ENCODE measurements at regions of chr6 and their contacts with region 1.

Region 1: DNA sequence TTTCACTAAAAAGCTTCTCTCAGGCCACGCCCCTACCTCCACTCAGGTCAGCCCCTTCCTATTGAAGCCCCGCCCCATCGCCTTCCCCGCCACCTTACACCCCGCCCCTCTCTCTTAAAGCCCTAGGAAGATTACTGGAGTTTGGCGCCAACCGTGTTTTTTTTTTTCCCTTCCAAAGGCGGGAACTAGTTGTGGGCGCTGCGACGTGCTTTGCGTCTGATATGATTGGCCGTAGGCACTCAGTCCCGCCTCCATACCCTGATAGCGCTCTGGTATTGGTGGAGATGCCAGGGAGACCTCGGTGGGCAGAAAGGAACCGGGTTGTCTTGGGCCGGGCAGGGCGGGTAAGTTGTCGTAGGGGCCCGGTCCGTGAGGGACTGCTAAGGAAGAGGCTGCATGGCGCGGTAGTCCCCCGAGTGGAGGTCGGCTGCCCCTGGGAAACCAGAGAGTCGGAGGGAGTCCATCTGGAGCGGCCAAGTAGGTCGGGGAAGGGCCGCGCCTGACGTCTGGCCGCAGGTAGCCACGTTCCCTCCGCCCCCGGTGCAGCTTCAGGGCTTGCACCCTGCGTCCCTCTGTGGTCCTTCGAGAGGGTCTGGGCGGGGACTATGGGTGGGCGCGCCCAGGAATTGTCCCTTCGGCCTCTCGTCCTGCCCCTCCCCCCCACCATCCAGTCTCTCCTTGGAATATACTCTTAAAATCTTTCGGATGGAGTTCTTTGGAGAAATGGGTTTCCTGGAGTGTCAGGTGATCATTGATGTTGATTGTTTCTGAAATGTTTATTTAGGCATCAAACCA is at the start of gene CASP8AP2:
- DNase-seq: peak; percentile 96
- H3K4me3 Mint-ChIP-seq: peak within 1 kb of the TSS; percentile 99
- H3K27ac Mint-ChIP-seq: peak within 1 kb of the TSS; percentile 96
- H3K4me1 Mint-ChIP-seq: peaks cover 42% of the 10 kb centered on the region
- H3K27me3 Mint-ChIP-seq: no peaks in the 10 kb centered on the region
- total RNA-seq, gene CASP8AP2: 37.5 to 39.0 TPM

Region 2: GRCh38 chr6:89638320-89639195 is 191.2 kb before region 1 on chr6 and contains the start of gene LYRM2:
- CTCF ChIA-PET with region 1: no interaction called
- POLR2A ChIA-PET with region 1: interaction called, 15 read pairs
- DNase-seq: peak; percentile 92
- H3K4me3 Mint-ChIP-seq: peak within 1 kb of the TSS; percentile 90
- H3K27ac Mint-ChIP-seq: peak within 1 kb of the TSS; percentile 97
- H3K4me1 Mint-ChIP-seq: peaks cover 37% of the 10 kb centered on the region
- H3K27me3 Mint-ChIP-seq: no peaks in the 10 kb centered on the region
- total RNA-seq, gene LYRM2: 31.4 to 34.4 TPM

Region 3: DNA sequence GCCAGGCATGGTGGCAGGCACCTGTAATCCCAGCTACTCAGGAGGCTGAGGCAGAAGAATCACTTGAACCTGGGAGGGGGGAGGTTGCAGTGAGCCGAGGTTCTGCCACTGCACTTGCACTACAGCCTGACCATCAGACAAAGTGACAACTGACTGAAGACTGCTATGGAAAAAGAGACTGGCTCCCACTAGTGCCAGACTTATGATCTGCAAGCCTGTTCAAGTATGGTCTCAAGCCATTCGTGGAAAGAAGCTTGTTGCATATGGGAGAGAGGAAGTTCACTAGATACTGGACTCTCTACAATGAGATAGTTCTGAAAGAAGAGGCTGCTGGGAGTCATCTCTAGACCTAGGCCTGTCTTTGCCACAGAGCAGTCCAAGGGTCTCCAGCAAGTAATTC is 36.9 kb before region 1 on chr6:
- CTCF ChIA-PET with region 1: interaction called, 7 read pairs
- POLR2A ChIA-PET with region 1: interaction called, 17 read pairs
- DNase-seq: peak; percentile 49
- H3K4me3 Mint-ChIP-seq: no peak overlapping the region
- H3K27ac Mint-ChIP-seq: peak overlapping the region; percentile 73
- H3K4me1 Mint-ChIP-seq: peaks cover 26% of the 10 kb centered on the region
- H3K27me3 Mint-ChIP-seq: no peaks in the 10 kb centered on the region

Region 4: GRCh38 chr6:89819336-89820130 is 10.3 kb before region 1 on chr6 and contains the start of gene MDN1:
- CTCF ChIA-PET with region 1: interaction called, 38 read pairs
- POLR2A ChIA-PET with region 1: interaction called, 160 read pairs
- DNase-seq: peak; percentile 91
- H3K4me3 Mint-ChIP-seq: peak within 1 kb of the TSS; percentile 88
- H3K27ac Mint-ChIP-seq: peak within 1 kb of the TSS; percentile 89
- H3K4me1 Mint-ChIP-seq: peaks cover 31% of the 10 kb centered on the region
- H3K27me3 Mint-ChIP-seq: no peaks in the 10 kb centered on the region
- total RNA-seq, gene MDN1: 38.2 to 39.4 TPM

Region 5: DNA sequence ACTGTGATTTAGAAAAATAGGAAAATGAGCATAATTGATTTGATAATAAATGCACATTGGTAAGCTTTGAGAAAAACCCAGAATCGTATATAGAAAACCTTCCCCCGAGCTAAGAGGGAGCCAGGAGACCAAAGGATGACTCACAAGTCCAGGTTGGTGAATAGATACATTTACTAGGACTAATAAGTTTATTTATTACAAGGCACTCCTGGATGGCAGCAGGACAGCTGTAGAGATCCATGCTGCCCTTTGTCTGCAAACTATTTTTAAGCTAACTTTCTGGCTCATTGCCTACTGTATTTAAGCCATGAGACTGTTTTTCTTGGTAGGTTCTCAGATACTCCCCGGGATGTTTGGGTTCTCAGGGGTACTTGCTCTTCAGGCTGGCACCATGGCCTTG is 13.3 kb after region 1 on chr6:
- CTCF ChIA-PET with region 1: no interaction called
- POLR2A ChIA-PET with region 1: interaction called, 16 read pairs
- DNase-seq: no peak
- H3K4me3 Mint-ChIP-seq: no peak overlapping the region
- H3K27ac Mint-ChIP-seq: no peak overlapping the region
- H3K4me1 Mint-ChIP-seq: peaks cover 24% of the 10 kb centered on the region
- H3K27me3 Mint-ChIP-seq: no peaks in the 10 kb centered on the region

Region 6: DNA sequence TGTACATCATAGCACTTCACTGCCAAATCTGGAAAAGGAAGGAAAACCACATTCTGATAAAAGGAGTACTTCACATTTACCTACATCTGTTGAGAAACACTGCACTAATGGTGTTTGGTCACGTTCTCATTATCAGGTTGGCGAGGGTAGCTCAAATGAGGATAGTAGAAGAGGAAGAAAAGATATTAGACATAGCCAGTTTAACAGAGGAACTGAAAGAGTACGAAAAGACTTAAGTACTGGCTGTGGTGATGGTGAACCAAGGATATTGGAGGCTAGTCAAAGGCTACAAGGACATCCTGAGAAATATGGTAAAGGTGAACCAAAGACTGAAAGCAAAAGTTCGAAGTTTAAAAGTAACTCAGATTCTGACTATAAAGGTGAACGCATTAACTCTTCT is 32.5 kb after region 1 on chr6:
- CTCF ChIA-PET with region 1: no interaction called
- POLR2A ChIA-PET with region 1: interaction called, 17 read pairs
- DNase-seq: no peak
- H3K4me3 Mint-ChIP-seq: no peak overlapping the region
- H3K27ac Mint-ChIP-seq: peak overlapping the region; percentile 77
- H3K4me1 Mint-ChIP-seq: peaks cover 41% of the 10 kb centered on the region
- H3K27me3 Mint-ChIP-seq: no peaks in the 10 kb centered on the region

Region 7: DNA sequence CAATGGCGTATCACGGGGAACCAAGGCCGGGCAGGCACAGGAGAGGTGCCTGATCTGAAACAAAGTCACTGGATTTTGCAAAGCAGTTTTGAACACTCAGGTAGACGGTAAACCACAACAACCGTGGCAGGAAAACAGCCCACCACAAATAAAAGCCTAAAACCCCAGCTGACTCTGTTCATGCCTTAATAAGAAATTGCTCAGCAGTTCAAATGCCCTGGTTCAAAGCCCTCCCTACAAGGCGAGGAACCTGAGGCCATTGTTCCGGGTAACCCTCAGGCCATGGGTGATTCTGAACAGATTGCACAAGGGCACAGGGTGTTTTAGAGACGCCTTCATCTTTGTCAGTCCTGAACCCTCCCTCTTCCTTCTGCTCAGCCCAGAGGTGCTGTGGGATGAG is 643.0 kb after region 1 on chr6:
- CTCF ChIA-PET with region 1: no interaction called
- POLR2A ChIA-PET with region 1: interaction called, 13 read pairs
- DNase-seq: peak; percentile 75
- H3K4me3 Mint-ChIP-seq: peak overlapping the region; percentile 70
- H3K27ac Mint-ChIP-seq: peak overlapping the region; percentile 92
- H3K4me1 Mint-ChIP-seq: peaks cover 98% of the 10 kb centered on the region
- H3K27me3 Mint-ChIP-seq: peaks cover 12% of the 10 kb centered on the region